ENCODE measurements at regions of chr7 and their contacts with region 1.

Region 1: DNA sequence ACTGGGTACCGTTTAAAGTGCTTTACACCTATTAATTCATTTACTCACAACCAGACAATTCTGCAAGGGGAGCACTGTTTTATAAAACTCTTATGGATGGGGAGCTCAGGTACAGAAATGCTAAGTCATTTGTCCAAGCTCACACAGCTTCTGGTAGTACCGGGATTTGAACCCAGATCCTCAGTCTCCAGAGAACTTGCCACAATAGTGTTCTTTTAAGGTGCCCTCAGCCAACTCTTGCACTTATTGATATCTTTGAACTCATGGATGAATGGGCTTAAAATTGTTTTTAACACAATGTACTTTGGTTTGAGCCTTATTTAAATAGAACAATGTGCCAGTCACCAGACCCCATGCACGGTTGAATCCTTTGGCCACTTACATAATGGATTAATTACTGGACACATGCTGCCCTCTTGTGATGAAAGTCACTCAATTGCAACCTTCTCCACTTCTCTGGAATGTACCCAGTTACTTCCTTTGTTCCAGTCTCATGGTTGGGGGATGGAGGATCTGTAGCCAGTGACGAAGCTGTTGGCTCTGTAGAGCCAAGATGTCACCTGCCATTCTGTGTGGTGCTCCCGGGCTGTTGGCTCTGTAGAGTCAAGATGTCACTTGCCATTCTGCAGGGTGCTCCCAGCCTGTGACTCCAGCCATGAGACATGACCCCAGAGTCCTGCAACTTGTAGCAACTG is 65.6 kb downstream of the NOD1 start:
- DNase-seq: peak; percentile 74
- H3K4me3 ChIP-seq: no peak overlapping the region
- H3K27ac ChIP-seq: no peak overlapping the region
- H3K4me1 ChIP-seq: no peaks in the 10 kb centered on the region
- H3K27me3 ChIP-seq: no peaks in the 10 kb centered on the region
- CTCF ChIP-seq: peak; percentile 57

Region 2: DNA sequence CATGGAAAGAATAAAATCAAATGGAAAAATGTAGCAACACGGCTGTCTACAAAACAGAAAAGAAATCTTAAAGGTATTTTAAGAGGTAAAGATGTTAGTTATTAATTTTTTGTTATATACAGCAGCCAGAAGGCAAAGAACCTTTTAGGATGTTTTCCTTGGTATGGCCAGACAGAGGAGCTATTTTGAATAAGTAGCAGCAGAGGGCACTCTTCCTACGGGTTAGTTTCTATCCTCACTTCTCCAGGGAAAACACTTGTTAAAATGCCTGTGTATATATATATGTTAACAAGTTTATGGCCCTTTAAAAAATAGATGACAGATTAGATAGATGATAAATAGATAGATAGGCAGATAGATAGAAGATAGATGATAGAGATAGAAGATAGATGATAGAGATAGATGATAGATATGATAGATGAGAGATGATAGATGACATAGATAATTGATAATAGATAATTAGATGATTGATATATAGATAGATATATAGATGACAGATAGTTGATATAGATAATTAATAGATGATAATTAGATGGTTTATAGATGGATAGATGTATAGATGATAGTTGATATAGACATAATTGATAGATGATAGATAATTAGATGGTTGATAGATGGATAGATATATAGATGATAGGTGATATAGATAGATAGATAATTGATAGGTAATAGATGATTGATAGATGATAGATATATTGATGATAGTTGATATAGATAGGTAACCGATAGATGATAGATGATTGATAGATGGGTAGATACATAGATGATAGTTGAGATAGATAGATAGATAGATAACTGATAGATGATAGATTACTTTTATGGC is 664.5 kb before region 1 on chr7:
- CTCF ChIA-PET with region 1: no interaction called
- POLR2A ChIA-PET with region 1: no interaction called
- intact Hi-C with region 1: loop called (anchors 5 kb)
- DNase-seq: peak; percentile 71
- H3K4me3 ChIP-seq: no peak overlapping the region
- H3K27ac ChIP-seq: no peak overlapping the region
- H3K4me1 ChIP-seq: no peaks in the 10 kb centered on the region
- H3K27me3 ChIP-seq: no peaks in the 10 kb centered on the region
- CTCF ChIP-seq: peak; percentile 72

Region 3: DNA sequence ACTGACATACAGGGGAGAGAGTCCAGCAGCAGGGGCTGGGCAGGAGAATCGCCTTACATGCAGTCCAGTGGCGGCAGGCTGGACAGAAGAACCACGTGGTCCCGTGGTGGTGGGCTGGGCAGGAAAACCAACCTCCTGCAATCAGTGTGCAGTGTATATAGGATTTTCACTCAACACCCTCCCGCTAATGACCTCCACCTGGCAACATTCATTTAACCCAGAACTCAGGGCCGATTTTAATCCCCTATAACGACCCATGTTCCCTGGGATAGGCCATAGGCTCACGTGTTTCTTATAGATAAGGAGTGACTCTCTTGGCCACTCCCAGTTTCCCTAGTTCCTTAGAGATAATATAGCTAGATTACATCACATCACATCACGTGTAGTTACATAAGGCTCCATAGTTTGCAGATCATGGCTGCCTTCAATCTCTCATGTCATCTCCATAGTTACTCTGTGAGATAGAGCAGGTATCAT is 258.8 kb before region 1 on chr7:
- CTCF ChIA-PET with region 1: no interaction called
- POLR2A ChIA-PET with region 1: no interaction called
- intact Hi-C with region 1: no loop called
- DNase-seq: no peak
- H3K4me3 ChIP-seq: no peak overlapping the region
- H3K27ac ChIP-seq: no peak overlapping the region
- H3K4me1 ChIP-seq: no peaks in the 10 kb centered on the region
- H3K27me3 ChIP-seq: no peaks in the 10 kb centered on the region
- CTCF ChIP-seq: no peak

Region 4: DNA sequence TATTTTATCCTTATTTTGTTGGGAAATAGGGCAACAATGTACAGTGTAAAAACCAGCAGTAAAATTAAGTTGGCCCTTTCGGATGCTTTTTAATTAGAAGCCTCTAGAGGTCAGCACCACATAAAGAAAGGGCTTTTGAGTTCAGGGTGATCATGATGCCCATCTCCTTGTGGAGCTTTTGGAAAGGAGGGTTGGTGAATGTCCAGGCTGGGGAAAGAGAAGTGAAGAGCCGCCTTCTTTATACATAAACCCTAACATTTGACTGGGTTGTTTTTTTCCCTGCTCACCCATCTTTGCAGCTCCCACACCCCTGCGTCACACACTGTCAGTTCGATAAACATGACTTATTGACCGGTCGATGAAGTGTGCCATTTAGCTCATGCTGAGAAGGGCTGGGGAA is 248.4 kb before region 1 on chr7:
- CTCF ChIA-PET with region 1: no interaction called
- POLR2A ChIA-PET with region 1: no interaction called
- intact Hi-C with region 1: loop called (anchors 5 kb)
- DNase-seq: peak; percentile 61
- H3K4me3 ChIP-seq: no peak overlapping the region
- H3K27ac ChIP-seq: no peak overlapping the region
- H3K4me1 ChIP-seq: no peaks in the 10 kb centered on the region
- H3K27me3 ChIP-seq: no peaks in the 10 kb centered on the region
- CTCF ChIP-seq: peak; percentile 60

Region 5: GRCh38 chr7:30276203-30276900 is 136.6 kb before region 1 on chr7:
- CTCF ChIA-PET with region 1: interaction called, 3 read pairs
- POLR2A ChIA-PET with region 1: no interaction called
- intact Hi-C with region 1: loop called (anchors 1 kb)
- DNase-seq: peak; percentile 71
- H3K4me3 ChIP-seq: no peak overlapping the region
- H3K27ac ChIP-seq: no peak overlapping the region
- H3K4me1 ChIP-seq: no peaks in the 10 kb centered on the region
- H3K27me3 ChIP-seq: no peaks in the 10 kb centered on the region
- CTCF ChIP-seq: peak; percentile 79

Region 6: DNA sequence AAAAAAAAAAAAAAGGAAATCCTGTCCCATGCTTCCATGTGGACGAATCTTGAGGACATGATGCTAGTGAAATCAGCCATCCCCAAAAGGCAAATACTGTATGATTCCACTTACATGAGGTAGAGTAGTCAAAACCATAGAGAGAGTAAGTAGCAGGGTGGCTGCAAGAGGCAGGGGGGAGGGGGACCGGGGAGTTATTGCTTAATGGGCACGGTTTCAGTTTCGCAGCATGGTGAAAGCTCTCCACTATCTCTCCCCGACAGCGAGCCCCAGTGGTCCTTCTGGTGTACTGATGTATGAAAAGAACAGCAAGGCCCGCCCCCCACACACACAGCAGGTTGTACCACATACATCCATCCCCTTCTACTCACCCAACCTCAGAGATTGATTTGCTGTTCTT is 32.8 kb after region 1 on chr7:
- CTCF ChIA-PET with region 1: no interaction called
- POLR2A ChIA-PET with region 1: no interaction called
- intact Hi-C with region 1: loop called (anchors 5 kb)
- DNase-seq: peak; percentile 93
- H3K4me3 ChIP-seq: no peak overlapping the region
- H3K27ac ChIP-seq: no peak overlapping the region
- H3K4me1 ChIP-seq: peaks cover 3% of the 10 kb centered on the region
- H3K27me3 ChIP-seq: no peaks in the 10 kb centered on the region
- CTCF ChIP-seq: peak; percentile 65

Measured in A673 (cell line).